CD14-positive monocyte (primary cell): ENCODE measurements at regions of chr19 and their contacts with region 1.

Region 1: GRCh38 chr19:42283143-42284065 is 14.4 kb downstream of the CIC start:
- DNase-seq: peak; percentile 89 to 92 (median 90)
- H3K4me3 ChIP-seq: peak overlapping the region; percentile 39 to 76 (median 60)
- H3K4me3 Mint-ChIP-seq: no peak overlapping the region
- H3K27ac ChIP-seq: peak overlapping the region; percentile 63 to 89
- H3K27ac Mint-ChIP-seq: no peak overlapping the region
- H3K4me1 ChIP-seq: peaks cover 64 to 85% of the 10 kb centered on the region in 2 donors
- H3K4me1 Mint-ChIP-seq: peaks cover 47% of the 10 kb centered on the region
- H3K27me3 ChIP-seq: no peaks in the 10 kb centered on the region
- H3K27me3 Mint-ChIP-seq: peaks cover 0 to 5% (median 2%) of the 10 kb centered on the region in 3 donors
- CTCF ChIP-seq: no peak

Region 2: DNA sequence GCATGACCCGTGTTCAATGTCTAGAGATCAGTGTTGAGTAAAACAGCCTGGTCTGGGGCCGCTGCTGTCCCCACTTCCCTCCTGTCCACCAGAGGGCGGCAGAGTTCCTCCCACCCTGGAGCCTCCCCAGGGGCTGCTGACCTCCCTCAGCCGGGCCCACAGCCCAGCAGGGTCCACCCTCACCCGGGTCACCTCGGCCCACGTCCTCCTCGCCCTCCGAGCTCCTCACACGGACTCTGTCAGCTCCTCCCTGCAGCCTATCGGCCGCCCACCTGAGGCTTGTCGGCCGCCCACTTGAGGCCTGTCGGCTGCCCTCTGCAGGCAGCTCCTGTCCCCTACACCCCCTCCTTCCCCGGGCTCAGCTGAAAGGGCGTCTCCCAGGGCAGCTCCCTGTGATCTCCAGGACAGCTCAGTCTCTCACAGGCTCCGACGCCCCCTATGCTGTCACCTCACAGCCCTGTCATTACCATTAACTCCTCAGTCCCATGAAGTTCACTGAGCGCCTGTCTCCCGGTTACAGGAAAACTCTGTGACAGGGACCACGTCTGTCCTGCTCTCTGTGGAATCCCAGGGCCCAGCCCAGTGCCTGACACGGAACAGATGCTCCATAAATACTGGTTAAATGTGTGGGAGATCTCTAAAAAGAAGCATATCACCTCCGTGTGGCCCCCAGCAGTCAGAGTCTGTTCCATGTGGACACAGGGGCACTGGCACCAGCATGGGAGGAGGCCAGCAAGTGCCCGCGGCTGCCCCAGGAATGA is 576.5 kb before region 1 on chr19:
- intact Hi-C with region 1: no loop called
- DNase-seq: peak; percentile 50 to 62 (median 56)
- H3K4me3 ChIP-seq: peak overlapping the region in 2 of 3 experiments; percentile 26 to 65
- H3K4me3 Mint-ChIP-seq: peak overlapping the region; percentile 79 to 89
- H3K27ac ChIP-seq: no peak overlapping the region
- H3K27ac Mint-ChIP-seq: peak overlapping the region in 2 of 7 donors; percentile 45 to 77
- H3K4me1 ChIP-seq: peaks cover 0 to 3% of the 10 kb centered on the region in 2 donors
- H3K4me1 Mint-ChIP-seq: peaks cover 5% of the 10 kb centered on the region
- H3K27me3 ChIP-seq: peaks cover 0 to 6% of the 10 kb centered on the region in 2 donors
- H3K27me3 Mint-ChIP-seq: peaks cover 8 to 28% (median 22%) of the 10 kb centered on the region in 3 donors
- CTCF ChIP-seq: peak; percentile 100

Region 3: DNA sequence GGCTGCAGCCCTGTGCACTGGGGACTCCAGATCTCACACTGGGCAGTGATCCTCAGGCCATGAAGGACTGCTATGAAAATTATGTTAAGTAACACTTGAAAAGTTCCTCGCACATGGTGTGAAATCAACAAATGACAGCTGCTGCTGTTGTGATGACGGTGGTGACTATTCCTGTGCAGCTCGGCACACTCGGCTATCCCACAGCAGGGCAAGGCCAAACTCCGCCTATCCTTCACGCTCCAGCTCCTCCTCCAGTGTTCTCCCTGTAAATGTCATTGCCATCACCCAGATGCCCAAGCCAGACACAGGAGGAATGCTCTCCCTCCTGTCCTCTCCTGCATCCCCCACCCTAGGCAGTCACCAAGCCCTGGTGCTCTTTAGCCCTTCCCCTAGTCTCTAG is 244.7 kb before region 1 on chr19:
- intact Hi-C with region 1: no loop called
- DNase-seq: no peak
- H3K4me3 ChIP-seq: no peak overlapping the region
- H3K4me3 Mint-ChIP-seq: no peak overlapping the region
- H3K27ac ChIP-seq: no peak overlapping the region
- H3K27ac Mint-ChIP-seq: no peak overlapping the region
- H3K4me1 ChIP-seq: no peaks in the 10 kb centered on the region
- H3K4me1 Mint-ChIP-seq: peaks cover 2% of the 10 kb centered on the region
- H3K27me3 ChIP-seq: no peaks in the 10 kb centered on the region
- H3K27me3 Mint-ChIP-seq: peaks cover 1 to 2% (median 2%) of the 10 kb centered on the region in 3 donors
- CTCF ChIP-seq: no peak

Region 4: DNA sequence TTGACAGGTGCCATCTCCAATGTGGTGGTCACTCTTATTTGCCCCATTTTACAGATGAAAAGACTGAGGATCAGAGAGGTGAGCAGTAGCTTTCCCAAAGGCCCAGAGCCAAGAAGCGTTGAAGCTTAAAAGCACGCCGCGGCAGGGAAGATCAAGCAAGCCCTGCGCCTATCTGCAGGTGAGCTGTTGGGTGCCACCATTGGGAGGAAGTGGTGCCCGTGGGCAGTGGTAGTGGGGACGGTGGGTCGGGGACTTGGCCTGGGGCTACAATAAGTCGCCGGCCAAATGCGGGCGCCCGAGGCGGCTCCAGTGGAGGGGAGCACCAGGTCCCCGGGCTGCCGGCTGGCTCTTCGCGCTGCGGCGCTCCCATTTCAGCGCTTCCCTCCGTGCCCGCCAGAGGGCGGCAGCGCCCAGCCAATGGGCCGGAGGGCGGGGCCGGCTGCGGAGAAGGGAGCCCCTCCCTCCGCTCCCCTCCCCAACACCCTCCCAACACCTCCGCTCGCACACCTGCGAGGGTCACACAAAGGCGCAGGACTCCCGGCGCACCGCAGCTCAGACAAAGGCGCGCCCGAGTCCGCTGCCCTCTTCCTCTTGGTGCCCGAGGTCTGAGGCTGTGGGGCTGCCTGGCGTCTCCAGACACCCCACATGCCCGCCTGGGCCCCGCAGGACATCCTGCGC is 150.4 kb before region 1 on chr19:
- intact Hi-C with region 1: loop called (anchors 5 to 10 kb)
- DNase-seq: peak; percentile 68 to 70 (median 68)
- H3K4me3 ChIP-seq: peak overlapping the region; percentile 86 to 98 (median 97)
- H3K4me3 Mint-ChIP-seq: peak overlapping the region; percentile 98 to 99
- H3K27ac ChIP-seq: peak overlapping the region; percentile 85 to 89
- H3K27ac Mint-ChIP-seq: peak overlapping the region; percentile 80 to 97 (median 95)
- H3K4me1 ChIP-seq: peaks cover 45 to 65% of the 10 kb centered on the region in 2 donors
- H3K4me1 Mint-ChIP-seq: peaks cover 54% of the 10 kb centered on the region
- H3K27me3 ChIP-seq: no peaks in the 10 kb centered on the region
- H3K27me3 Mint-ChIP-seq: peaks cover 0 to 3% (median 3%) of the 10 kb centered on the region in 3 donors
- CTCF ChIP-seq: peak; percentile 99

Region 5: GRCh38 chr19:42199440-42200115 is 83.8 kb before region 1 on chr19:
- intact Hi-C with region 1: loop called (anchors 5 to 10 kb)
- DNase-seq: peak; percentile 82 to 87 (median 86)
- H3K4me3 ChIP-seq: peak overlapping the region; percentile 28 to 79 (median 54)
- H3K4me3 Mint-ChIP-seq: peak overlapping the region; percentile 79 to 86
- H3K27ac ChIP-seq: peak overlapping the region; percentile 100
- H3K27ac Mint-ChIP-seq: peak overlapping the region; percentile 100
- H3K4me1 ChIP-seq: peaks cover 90% of the 10 kb centered on the region in 2 donors
- H3K4me1 Mint-ChIP-seq: peaks cover 87% of the 10 kb centered on the region
- H3K27me3 ChIP-seq: no peaks in the 10 kb centered on the region
- H3K27me3 Mint-ChIP-seq: peaks cover 0 to 5% (median 0%) of the 10 kb centered on the region in 3 donors
- CTCF ChIP-seq: peak; percentile 74

Region 6: GRCh38 chr19:42229855-42230351 is 53.5 kb before region 1 on chr19:
- intact Hi-C with region 1: no loop called
- DNase-seq: no peak
- H3K4me3 ChIP-seq: no peak overlapping the region
- H3K4me3 Mint-ChIP-seq: no peak overlapping the region
- H3K27ac ChIP-seq: peak overlapping the region in 1 of 2 donors; percentile 37
- H3K27ac Mint-ChIP-seq: peak overlapping the region in 4 of 7 donors; percentile 52 to 72 (median 70)
- H3K4me1 ChIP-seq: no peaks in the 10 kb centered on the region
- H3K4me1 Mint-ChIP-seq: peaks cover 10% of the 10 kb centered on the region
- H3K27me3 ChIP-seq: no peaks in the 10 kb centered on the region
- H3K27me3 Mint-ChIP-seq: no peaks in the 10 kb centered on the region
- CTCF ChIP-seq: no peak

Region 7: GRCh38 chr19:42244347-42245220 is 38.8 kb before region 1 on chr19:
- intact Hi-C with region 1: loop called (anchors 5 kb)
- DNase-seq: peak; percentile 90 to 94 (median 90)
- H3K4me3 ChIP-seq: peak overlapping the region; percentile 79 to 96 (median 84)
- H3K4me3 Mint-ChIP-seq: peak overlapping the region; percentile 95 to 99
- H3K27ac ChIP-seq: peak overlapping the region; percentile 61 to 76
- H3K27ac Mint-ChIP-seq: peak overlapping the region; percentile 96 to 98 (median 97)
- H3K4me1 ChIP-seq: peaks cover 37 to 44% of the 10 kb centered on the region in 2 donors
- H3K4me1 Mint-ChIP-seq: peaks cover 48% of the 10 kb centered on the region
- H3K27me3 ChIP-seq: no peaks in the 10 kb centered on the region
- H3K27me3 Mint-ChIP-seq: peaks cover 0 to 4% (median 3%) of the 10 kb centered on the region in 3 donors
- CTCF ChIP-seq: peak; percentile 68

Region 8: DNA sequence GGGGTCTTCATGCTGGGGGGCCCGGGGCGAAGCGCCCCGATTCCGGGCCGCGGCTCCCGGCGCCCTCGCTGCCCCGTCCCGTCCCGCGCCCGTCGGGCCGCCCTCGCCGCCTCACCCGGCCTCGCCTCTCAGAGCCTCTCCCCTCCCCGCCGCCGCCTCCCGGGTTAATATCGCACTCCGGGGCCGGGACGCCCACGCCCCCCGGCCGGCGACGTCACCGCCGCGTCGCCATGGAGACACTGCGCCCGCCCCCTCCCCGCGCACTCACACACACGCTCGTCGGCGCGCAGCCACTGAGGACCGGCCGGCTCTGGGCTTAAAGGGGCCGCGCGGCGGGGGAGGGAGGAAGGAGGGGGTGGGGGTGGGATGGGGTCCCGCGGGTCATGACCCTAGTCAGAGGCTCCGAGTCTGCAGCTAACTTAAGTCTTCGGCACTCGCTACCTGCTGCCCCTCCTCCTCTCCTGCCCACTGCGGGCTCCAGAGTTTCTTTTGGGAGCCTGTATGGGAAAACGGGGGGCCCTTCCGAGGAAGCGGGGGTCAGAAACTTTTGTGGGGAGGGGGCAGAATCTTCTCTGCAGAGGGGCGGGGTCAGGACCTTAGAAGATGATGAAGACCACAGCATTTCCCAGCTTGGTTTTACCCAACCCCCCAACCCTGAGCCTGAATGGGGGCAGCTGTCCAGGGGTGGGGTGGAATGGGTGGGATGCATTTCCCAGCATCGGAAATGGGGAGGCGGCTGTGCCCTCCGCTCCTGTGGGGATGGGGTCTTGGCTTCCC is 28.2 kb before region 1 on chr19 and contains the start of gene ERF:
- intact Hi-C with region 1: loop called in 1 of 2 experiments (anchors 5 kb)
- DNase-seq: peak; percentile 80 to 90 (median 89)
- H3K4me3 ChIP-seq: peak within 1 kb of the TSS; percentile 79 to 99 (median 99)
- H3K4me3 Mint-ChIP-seq: peak within 1 kb of the TSS; percentile 84 to 93
- H3K27ac ChIP-seq: peak within 1 kb of the TSS; percentile 85 to 88
- H3K27ac Mint-ChIP-seq: peak within 1 kb of the TSS; percentile 57 to 92 (median 77)
- H3K4me1 ChIP-seq: peaks cover 40 to 47% of the 10 kb centered on the region in 2 donors
- H3K4me1 Mint-ChIP-seq: peaks cover 39% of the 10 kb centered on the region
- H3K27me3 ChIP-seq: peaks cover 3 to 14% of the 10 kb centered on the region in 2 donors
- H3K27me3 Mint-ChIP-seq: peaks cover 15 to 33% (median 24%) of the 10 kb centered on the region in 3 donors
- CTCF ChIP-seq: no peak
- polyA plus RNA-seq, gene ERF: 2.3 to 42.6 (median 3.4) TPM

Region 9: DNA sequence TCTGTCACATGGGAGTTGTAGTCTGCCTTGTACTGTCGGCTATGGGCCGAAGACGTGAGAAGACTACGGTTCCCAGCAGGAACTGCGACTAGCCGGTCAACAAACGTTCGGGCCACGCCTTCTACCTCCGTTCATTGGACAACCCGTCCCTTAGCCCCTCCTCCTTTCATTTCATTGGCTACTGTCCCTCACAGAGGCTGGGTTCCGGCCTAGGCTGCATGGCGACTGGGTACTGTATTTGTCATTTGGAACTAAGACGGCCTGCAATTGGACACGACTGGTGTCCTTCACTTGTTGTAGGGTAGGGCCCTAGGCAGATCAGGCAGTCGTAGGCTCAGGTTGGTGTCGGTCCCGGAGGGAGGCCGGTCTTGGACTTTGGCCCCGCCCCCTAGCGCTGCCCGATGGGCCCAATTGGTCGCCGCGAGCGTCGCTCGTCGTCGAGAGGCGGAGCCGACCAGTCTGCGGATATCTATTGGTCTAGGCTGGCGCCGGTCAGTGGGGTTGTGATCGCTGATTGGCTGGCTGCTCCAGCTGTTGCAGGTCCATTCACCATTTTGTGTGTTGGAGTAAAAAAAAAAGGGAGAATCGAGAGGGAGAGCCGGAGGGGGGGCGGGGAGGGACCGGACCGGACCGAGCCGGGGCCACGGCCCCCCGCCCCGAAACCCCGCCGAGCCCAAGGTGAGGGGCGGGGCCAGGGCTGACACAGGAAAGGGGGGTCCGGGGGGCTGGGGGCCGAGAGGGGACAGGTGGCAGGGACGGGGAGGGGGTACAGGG is 14.5 kb before region 1 on chr19 and contains the start of gene CIC:
- intact Hi-C with region 1: loop called (anchors 2 kb)
- DNase-seq: peak; percentile 100
- H3K4me3 ChIP-seq: peak within 1 kb of the TSS; percentile 73 to 88 (median 76)
- H3K4me3 Mint-ChIP-seq: peak within 1 kb of the TSS; percentile 84 to 95
- H3K27ac ChIP-seq: peak within 1 kb of the TSS; percentile 90 to 99
- H3K27ac Mint-ChIP-seq: peak within 1 kb of the TSS in 4 of 7 donors; percentile 98 to 99 (median 99)
- H3K4me1 ChIP-seq: peaks cover 30 to 35% of the 10 kb centered on the region in 2 donors
- H3K4me1 Mint-ChIP-seq: peaks cover 29% of the 10 kb centered on the region
- H3K27me3 ChIP-seq: no peaks in the 10 kb centered on the region
- H3K27me3 Mint-ChIP-seq: peaks cover 0 to 1% (median 1%) of the 10 kb centered on the region in 3 donors
- CTCF ChIP-seq: no peak
- polyA plus RNA-seq, gene CIC: 0.62 to 42.2 (median 0.87) TPM

Region 10: GRCh38 chr19:42301656-42302203 is 18.3 kb after region 1 on chr19 and contains the start of gene PRR19:
- intact Hi-C with region 1: loop called in 1 of 2 experiments (anchors 2 kb)
- DNase-seq: no peak
- H3K4me3 ChIP-seq: peak within 1 kb of the TSS; percentile 61 to 77 (median 69)
- H3K4me3 Mint-ChIP-seq: peak within 1 kb of the TSS; percentile 89 to 93
- H3K27ac ChIP-seq: peak within 1 kb of the TSS; percentile 3 to 20
- H3K27ac Mint-ChIP-seq: peak within 1 kb of the TSS; percentile 50 to 86 (median 74)
- H3K4me1 ChIP-seq: peaks cover 17 to 23% of the 10 kb centered on the region in 2 donors
- H3K4me1 Mint-ChIP-seq: peaks cover 25% of the 10 kb centered on the region
- H3K27me3 ChIP-seq: no peaks in the 10 kb centered on the region
- H3K27me3 Mint-ChIP-seq: peaks cover 1 to 8% (median 2%) of the 10 kb centered on the region in 3 donors
- CTCF ChIP-seq: no peak
- polyA plus RNA-seq, gene PRR19: 0.35 to 0.51 (median 0.38) TPM

Region 11: GRCh38 chr19:42378225-42379215 is 95.1 kb after region 1 on chr19:
- intact Hi-C with region 1: no loop called
- DNase-seq: no peak
- H3K4me3 ChIP-seq: no peak overlapping the region
- H3K4me3 Mint-ChIP-seq: no peak overlapping the region
- H3K27ac ChIP-seq: no peak overlapping the region
- H3K27ac Mint-ChIP-seq: no peak overlapping the region
- H3K4me1 ChIP-seq: no peaks in the 10 kb centered on the region
- H3K4me1 Mint-ChIP-seq: no peaks in the 10 kb centered on the region
- H3K27me3 ChIP-seq: no peaks in the 10 kb centered on the region
- H3K27me3 Mint-ChIP-seq: peaks cover 10 to 25% (median 23%) of the 10 kb centered on the region in 3 donors
- CTCF ChIP-seq: no peak